Panc1 (cell line): ENCODE measurements at regions of chrX and their contacts with region 1.

Region 1: DNA sequence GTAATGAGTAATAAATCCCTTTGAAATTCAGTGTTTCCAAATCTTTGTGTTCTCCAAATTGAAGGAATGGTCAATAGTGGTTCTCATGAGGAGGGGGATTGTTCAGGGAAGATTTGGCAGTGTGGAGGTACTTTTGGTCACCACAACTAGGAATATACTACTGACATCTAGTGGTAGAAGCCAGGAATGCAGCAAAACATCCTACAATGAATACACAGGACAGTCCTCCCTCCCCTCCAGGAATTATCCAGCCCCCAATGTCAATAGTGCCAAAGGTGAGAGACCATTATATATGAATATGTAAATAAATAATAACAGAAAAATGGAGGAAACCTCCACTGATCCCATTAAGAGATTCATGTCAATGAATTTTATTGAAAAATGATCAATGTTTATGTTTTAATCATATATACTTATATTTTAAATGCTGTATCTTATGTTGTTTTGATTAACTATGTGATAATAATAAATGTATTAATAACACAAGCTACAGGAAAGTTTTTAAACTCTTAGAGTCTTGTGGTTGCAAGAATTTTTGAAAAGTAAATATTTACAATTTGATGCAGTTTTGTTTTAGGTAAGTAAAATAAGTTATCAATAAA is 14.4 kb upstream of the FAM9A start:
- DNase-seq: peak; percentile 36
- ATAC-seq: peak; percentile 63; the same call in 1 of the 2 replicates
- H3K4me3 ChIP-seq: no peak overlapping the region
- H3K27ac ChIP-seq: no peak overlapping the region
- H3K4me1 ChIP-seq: no peaks in the 10 kb centered on the region
- H3K27me3 ChIP-seq: no peaks in the 10 kb centered on the region
- CTCF ChIP-seq: peak; percentile 72

Region 2: GRCh38 chrX:8647066-8647582 is 168.4 kb before region 1 on chrX:
- CTCF ChIA-PET with region 1: no interaction called
- POLR2A ChIA-PET with region 1: no interaction called
- in situ Hi-C with region 1: no loop called
- intact Hi-C with region 1: no loop called
- DNase-seq: no peak
- ATAC-seq: no peak
- H3K4me3 ChIP-seq: no peak overlapping the region
- H3K27ac ChIP-seq: no peak overlapping the region
- H3K4me1 ChIP-seq: no peaks in the 10 kb centered on the region
- H3K27me3 ChIP-seq: no peaks in the 10 kb centered on the region
- CTCF ChIP-seq: no peak

Region 3: GRCh38 chrX:8748855-8749254 is 66.7 kb before region 1 on chrX:
- CTCF ChIA-PET with region 1: no interaction called
- POLR2A ChIA-PET with region 1: no interaction called
- in situ Hi-C with region 1: no loop called
- intact Hi-C with region 1: loop called (anchors 5 kb)
- DNase-seq: no peak
- ATAC-seq: no peak
- H3K4me3 ChIP-seq: no peak overlapping the region
- H3K27ac ChIP-seq: no peak overlapping the region
- H3K4me1 ChIP-seq: no peaks in the 10 kb centered on the region
- H3K27me3 ChIP-seq: no peaks in the 10 kb centered on the region; the same call in 1 of the 2 replicates
- CTCF ChIP-seq: peak; percentile 70

Region 4: GRCh38 chrX:8832582-8833378 is 17.2 kb after region 1 on chrX:
- CTCF ChIA-PET with region 1: no interaction called
- POLR2A ChIA-PET with region 1: no interaction called
- in situ Hi-C with region 1: no loop called
- intact Hi-C with region 1: no loop called
- DNase-seq: no peak
- ATAC-seq: no peak
- H3K4me3 ChIP-seq: no peak overlapping the region
- H3K27ac ChIP-seq: no peak overlapping the region
- H3K4me1 ChIP-seq: no peaks in the 10 kb centered on the region
- H3K27me3 ChIP-seq: no peaks in the 10 kb centered on the region
- CTCF ChIP-seq: no peak